SK-N-SH (cell line): ENCODE measurements at regions of chr2 and their contacts with region 1.

Region 1: DNA sequence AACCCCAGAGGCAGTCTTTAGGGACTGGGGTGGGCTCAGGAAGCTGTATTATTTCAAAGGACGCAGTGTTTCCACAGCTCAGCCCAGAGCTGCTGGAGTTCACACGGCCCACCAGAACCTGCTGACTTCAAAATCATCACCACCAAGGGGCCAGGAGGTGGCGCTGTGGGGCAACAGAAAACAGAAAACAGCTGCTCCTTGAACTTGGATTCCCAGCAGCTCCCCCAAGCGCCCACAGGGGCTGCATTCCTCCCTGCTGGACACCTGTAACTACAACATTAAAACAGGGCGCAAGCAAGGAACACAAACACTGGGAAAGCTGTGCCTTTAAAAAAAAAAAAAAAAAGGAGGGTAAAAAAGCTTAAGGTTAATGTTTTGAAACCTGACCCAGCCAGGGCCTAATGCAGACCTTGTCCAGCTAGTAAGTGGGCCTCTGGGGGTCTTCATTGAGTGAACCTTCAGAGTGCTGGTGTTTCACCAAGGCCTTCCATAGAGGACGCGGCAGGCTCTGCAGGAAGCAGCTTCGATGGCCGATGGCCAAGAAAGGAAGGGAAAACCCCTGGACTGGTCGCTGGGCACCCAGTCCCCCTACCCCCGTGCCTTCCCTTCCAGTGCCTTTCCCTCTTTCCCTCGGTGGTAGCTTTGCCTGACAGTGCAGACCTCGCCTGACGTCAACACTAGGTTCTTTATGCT is 25.9 kb downstream of the MLPH start:
- DNase-seq: peak; percentile 91
- H3K4me3 ChIP-seq: peak overlapping the region in 1 of 2 experiments; percentile 33; a peak in 1 of 4 replicates
- H3K27ac ChIP-seq: peak overlapping the region in 1 of 2 experiments; percentile 100; a peak in 2 of 4 replicates
- H3K4me1 ChIP-seq: peaks cover 2 to 12% of the 10 kb centered on the region in 2 experiments; a peak in 2 of 4 replicates
- H3K27me3 ChIP-seq: no peaks in the 10 kb centered on the region
- CTCF ChIP-seq: peak; percentile 96
- EP300 ChIP-seq: no peak
- RAD21 ChIP-seq: peak; percentile 93

Region 2: DNA sequence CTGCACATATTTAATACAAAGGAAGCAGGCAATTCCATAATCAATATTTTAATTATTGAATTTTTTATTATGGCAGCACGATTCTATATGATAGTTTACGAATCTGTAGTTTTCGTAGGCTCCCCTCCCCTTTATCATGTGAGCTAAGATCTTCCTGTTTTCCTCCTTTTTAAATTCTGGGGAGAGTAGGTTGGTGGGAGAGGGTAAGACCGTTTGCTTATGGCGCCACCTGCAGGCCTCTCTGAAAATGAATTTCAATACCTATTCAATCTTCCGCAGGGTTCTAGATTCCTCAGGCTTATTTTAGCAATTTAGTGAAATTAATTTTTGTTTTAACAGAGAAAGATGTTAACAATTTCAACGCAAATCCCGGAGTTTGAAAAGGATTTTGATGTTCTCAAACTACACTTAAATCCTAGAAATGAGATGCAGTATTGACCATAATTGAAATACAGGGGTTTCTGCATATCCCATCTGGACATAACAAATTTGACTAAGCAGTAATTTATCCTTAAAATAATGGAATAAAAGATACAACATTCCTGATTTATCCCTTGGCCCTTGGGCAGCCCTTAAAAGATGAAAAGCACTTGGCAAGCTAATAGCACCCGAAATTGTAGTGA is 1332.0 kb before region 1 on chr2:
- CTCF ChIA-PET with region 1: no interaction called
- POLR2A ChIA-PET with region 1: no interaction called
- DNase-seq: peak; percentile 84
- H3K4me3 ChIP-seq: no peak overlapping the region; a peak in 1 of 4 replicates
- H3K27ac ChIP-seq: peak overlapping the region in 1 of 2 experiments; percentile 58; a peak in 2 of 4 replicates
- H3K4me1 ChIP-seq: peaks cover 0 to 16% of the 10 kb centered on the region in 2 experiments; a peak in 3 of 4 replicates
- H3K27me3 ChIP-seq: no peaks in the 10 kb centered on the region
- CTCF ChIP-seq: peak; percentile 89
- EP300 ChIP-seq: no peak
- RAD21 ChIP-seq: peak; percentile 88

Region 3: DNA sequence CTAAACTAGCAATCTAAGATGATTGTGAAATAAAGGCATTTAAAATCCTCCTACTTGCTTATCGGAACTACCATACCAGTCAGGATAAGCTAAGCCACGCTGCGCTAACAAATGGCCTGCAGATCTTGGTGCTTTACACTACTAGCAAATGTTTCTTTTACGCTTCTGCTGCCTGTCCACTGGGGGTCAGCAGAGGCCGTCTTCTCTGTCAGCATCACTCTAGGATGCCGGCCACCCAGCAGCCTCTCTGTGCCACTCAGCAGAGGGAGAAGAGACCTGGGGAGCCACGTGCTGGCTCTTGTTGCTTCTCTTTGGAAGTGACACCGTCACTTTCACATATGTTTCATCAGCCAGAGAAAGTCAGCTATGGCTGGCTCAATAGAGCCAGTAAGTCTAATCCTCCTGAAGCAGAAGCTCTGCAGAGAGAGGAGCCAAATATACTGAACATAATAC is 390.7 kb before region 1 on chr2:
- CTCF ChIA-PET with region 1: interaction called, 18 read pairs
- POLR2A ChIA-PET with region 1: no interaction called
- DNase-seq: peak; percentile 68
- H3K4me3 ChIP-seq: no peak overlapping the region
- H3K27ac ChIP-seq: no peak overlapping the region
- H3K4me1 ChIP-seq: peaks cover 3 to 5% of the 10 kb centered on the region in 2 experiments; a peak in 3 of 4 replicates
- H3K27me3 ChIP-seq: no peaks in the 10 kb centered on the region
- CTCF ChIP-seq: peak; percentile 60
- EP300 ChIP-seq: no peak
- RAD21 ChIP-seq: peak; percentile 81

Region 4: GRCh38 chr2:237213315-237214022 is 299.5 kb before region 1 on chr2:
- CTCF ChIA-PET with region 1: no interaction called
- POLR2A ChIA-PET with region 1: no interaction called
- DNase-seq: no peak
- H3K4me3 ChIP-seq: no peak overlapping the region
- H3K27ac ChIP-seq: peak overlapping the region in 1 of 2 experiments; percentile 77; a peak in 2 of 4 replicates
- H3K4me1 ChIP-seq: peaks cover 18 to 23% of the 10 kb centered on the region in 2 experiments; a peak in 3 of 4 replicates
- H3K27me3 ChIP-seq: no peaks in the 10 kb centered on the region
- CTCF ChIP-seq: no peak
- EP300 ChIP-seq: no peak
- RAD21 ChIP-seq: no peak

Region 5: GRCh38 chr2:237500681-237501424 is 12.1 kb before region 1 on chr2:
- CTCF ChIA-PET with region 1: interaction called, 48 read pairs
- POLR2A ChIA-PET with region 1: no interaction called
- DNase-seq: peak; percentile 41
- H3K4me3 ChIP-seq: peak overlapping the region in 1 of 2 experiments; percentile 2; a peak in 1 of 4 replicates
- H3K27ac ChIP-seq: peak overlapping the region; percentile 71 to 100
- H3K4me1 ChIP-seq: peaks cover 13 to 29% of the 10 kb centered on the region in 2 experiments; a peak in 3 of 4 replicates
- H3K27me3 ChIP-seq: no peaks in the 10 kb centered on the region
- CTCF ChIP-seq: no peak
- EP300 ChIP-seq: peak; percentile 44 to 99; a peak in 2 of 4 replicates
- RAD21 ChIP-seq: no peak

Region 6: GRCh38 chr2:237540823-237541222 is 27.9 kb after region 1 on chr2:
- CTCF ChIA-PET with region 1: interaction called, 28 read pairs
- POLR2A ChIA-PET with region 1: no interaction called
- DNase-seq: no peak
- H3K4me3 ChIP-seq: no peak overlapping the region
- H3K27ac ChIP-seq: no peak overlapping the region
- H3K4me1 ChIP-seq: peaks cover 0 to 8% of the 10 kb centered on the region in 2 experiments; a peak in 1 of 4 replicates
- H3K27me3 ChIP-seq: no peaks in the 10 kb centered on the region
- CTCF ChIP-seq: no peak
- EP300 ChIP-seq: no peak
- RAD21 ChIP-seq: no peak

Region 7: DNA sequence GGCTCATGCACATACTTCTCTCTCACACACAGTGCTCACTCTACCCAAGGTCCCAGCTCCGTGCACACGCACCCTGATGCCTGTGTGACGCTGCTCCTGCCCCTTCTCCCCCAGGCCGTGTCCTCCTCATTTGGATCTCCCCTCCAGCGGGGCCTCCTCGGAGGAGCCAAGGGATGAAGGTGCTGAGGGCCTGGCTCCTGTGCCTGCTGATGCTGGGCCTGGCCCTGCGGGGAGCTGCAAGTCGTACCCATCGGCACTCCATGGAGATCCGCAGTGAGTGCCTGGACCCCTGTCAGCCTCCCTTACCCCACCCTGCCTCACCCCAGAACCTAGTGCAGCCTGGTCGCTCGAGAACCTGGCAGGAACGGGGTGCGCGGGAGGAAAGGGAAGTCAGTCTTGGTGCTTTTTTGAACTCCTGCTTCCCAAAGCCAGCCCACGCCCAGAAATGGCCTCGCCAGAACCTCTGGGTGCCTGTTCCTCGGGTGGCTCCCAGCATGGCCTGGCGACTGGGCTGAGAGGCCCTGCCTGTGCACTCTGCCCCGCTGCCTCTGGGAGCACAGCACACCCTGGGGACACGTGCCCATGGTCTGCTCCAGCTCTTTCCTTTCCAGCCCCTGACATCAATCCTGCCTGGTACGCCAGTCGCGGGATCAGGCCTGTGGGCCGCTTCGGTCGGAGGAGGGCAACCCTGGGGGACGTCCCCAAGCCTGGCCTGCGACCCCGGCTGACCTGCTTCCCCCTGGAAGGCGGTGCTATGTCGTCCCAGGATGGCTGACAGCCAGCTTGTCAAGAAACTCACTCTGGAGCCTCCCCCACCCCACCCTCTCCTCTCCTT is 53.7 kb after region 1 on chr2 and contains the start of gene PRLH:
- CTCF ChIA-PET with region 1: interaction called, 311 read pairs
- POLR2A ChIA-PET with region 1: no interaction called
- DNase-seq: no peak
- H3K4me3 ChIP-seq: no peak within 1 kb of the TSS
- H3K27ac ChIP-seq: no peak within 1 kb of the TSS
- H3K4me1 ChIP-seq: no peaks in the 10 kb centered on the region; a peak in 1 of 4 replicates
- H3K27me3 ChIP-seq: no peaks in the 10 kb centered on the region
- CTCF ChIP-seq: no peak
- EP300 ChIP-seq: no peak
- RAD21 ChIP-seq: no peak
- polyA plus RNA-seq, gene PRLH: not detected in 2 replicates

Region 8: DNA sequence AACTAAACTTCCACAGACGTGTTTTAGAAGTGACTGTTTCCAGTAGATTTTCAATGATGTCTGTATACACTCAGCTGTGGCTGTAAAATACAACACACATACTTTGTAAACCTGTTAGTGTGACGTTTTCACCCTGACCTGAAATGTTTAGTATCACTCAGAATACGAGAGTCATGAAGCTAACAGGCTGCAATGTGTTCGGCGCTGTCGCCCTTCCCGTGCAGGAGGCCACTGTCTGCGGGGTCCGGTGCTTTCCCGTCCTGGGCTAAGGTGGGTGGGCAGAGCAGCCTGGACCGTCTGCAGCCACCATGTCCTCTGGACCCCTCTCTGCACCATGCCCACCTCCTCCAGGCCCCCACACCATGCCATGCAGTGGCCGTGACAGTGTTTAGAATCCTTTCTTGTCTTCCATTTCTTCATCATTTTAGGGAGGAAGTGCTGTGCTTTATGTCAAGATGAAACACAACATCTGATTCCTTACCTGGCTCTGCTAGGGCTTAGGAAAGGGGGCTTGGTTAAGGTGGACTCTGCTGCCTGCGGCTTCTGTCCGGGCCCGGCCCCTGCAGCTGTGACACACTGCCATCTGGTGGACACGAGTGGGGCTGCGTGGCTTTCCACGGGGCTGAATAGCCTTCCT is 231.8 kb after region 1 on chr2:
- CTCF ChIA-PET with region 1: interaction called, 30 read pairs
- POLR2A ChIA-PET with region 1: no interaction called
- DNase-seq: peak; percentile 92
- H3K4me3 ChIP-seq: no peak overlapping the region; a peak in 1 of 4 replicates
- H3K27ac ChIP-seq: peak overlapping the region in 1 of 2 experiments; percentile 16; a peak in 1 of 4 replicates
- H3K4me1 ChIP-seq: peaks cover 3 to 10% of the 10 kb centered on the region in 2 experiments; a peak in 2 of 4 replicates
- H3K27me3 ChIP-seq: no peaks in the 10 kb centered on the region
- CTCF ChIP-seq: peak; percentile 98
- EP300 ChIP-seq: no peak
- RAD21 ChIP-seq: peak; percentile 99

Region 9: GRCh38 chr2:238143239-238143951 is 630.5 kb after region 1 on chr2:
- CTCF ChIA-PET with region 1: no interaction called
- POLR2A ChIA-PET with region 1: no interaction called
- DNase-seq: no peak
- H3K4me3 ChIP-seq: no peak overlapping the region
- H3K27ac ChIP-seq: no peak overlapping the region
- H3K4me1 ChIP-seq: peaks cover 5 to 10% of the 10 kb centered on the region in 2 experiments; a peak in 3 of 4 replicates
- H3K27me3 ChIP-seq: no peaks in the 10 kb centered on the region
- CTCF ChIP-seq: no peak
- EP300 ChIP-seq: peak in 1 of 2 experiments; percentile 73; a peak in 1 of 4 replicates
- RAD21 ChIP-seq: no peak